Ovary (tissue), 10 donors: ENCODE measurements at regions of chr9 and their contacts with region 1.

Region 1: DNA sequence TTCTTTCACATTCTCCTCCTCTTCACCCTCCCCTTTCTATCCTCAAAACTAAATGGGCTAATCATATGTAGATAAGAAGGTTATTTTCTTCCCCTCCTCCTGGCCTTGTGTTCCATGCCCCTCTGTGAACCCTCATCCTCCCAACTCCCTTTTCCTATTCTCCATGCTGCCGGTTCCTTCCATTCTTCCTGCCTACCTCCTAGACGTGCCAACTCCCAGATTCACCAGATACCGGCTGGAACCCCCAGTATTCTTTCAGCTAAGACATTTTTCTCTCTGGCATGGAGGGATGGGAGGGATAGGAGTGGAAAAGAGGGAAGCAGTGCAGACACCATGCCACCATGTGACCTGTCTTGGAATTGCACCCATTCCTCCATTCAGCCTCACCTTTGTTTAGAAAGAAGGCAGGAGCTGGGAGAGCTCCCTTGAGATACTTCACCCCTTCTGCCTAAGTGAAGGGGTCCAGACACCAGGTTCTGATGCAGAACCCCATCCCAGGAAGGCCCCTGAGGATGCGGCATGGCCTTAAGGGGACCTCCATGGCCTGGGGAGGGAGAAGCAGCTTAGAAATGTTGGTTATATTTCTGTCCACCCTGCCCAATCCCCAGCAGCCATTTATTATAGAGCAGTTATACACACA is 4.8 kb downstream of the DNAJB5 start:
- DNase-seq: no peak
- H3K4me3 ChIP-seq: no peak overlapping the region
- H3K27ac ChIP-seq: peak overlapping the region; percentile 66 to 78
- H3K4me1 ChIP-seq: peaks cover 16% of the 10 kb centered on the region
- H3K27me3 ChIP-seq: no peaks in the 10 kb centered on the region
- CTCF ChIP-seq: peak in 2 of 3 donors; percentile 22 to 30
- EP300 ChIP-seq: no peak
- POLR2A ChIP-seq: no peak

Region 2: GRCh38 chr9:35035851-35036701 is 41.7 kb after region 1 on chr9:
- intact Hi-C with region 1: loop called in 1 of 4 experiments (anchors 5 kb)
- DNase-seq: peak; percentile 36 to 77 (median 62)
- H3K4me3 ChIP-seq: peak overlapping the region; percentile 3
- H3K27ac ChIP-seq: no peak overlapping the region
- H3K4me1 ChIP-seq: peaks cover 5% of the 10 kb centered on the region
- H3K27me3 ChIP-seq: no peaks in the 10 kb centered on the region
- CTCF ChIP-seq: no peak
- EP300 ChIP-seq: no peak
- POLR2A ChIP-seq: no peak